ENCODE measurements at regions of chr14 and their contacts with region 1.

Region 1: GRCh38 chr14:52299692-52300278 is 14.3 kb upstream of the PTGER2 start:
- DNase-seq: peak in 4 of 5 donors; percentile 55 to 64 (median 60)
- H3K4me3 ChIP-seq: no peak overlapping the region
- H3K4me3 Mint-ChIP-seq: peak overlapping the region in 1 of 8 donors; percentile 36
- H3K27ac ChIP-seq: no peak overlapping the region
- H3K27ac Mint-ChIP-seq: peak overlapping the region in 3 of 7 donors; percentile 39 to 62 (median 52)
- H3K4me1 ChIP-seq: peaks cover 40% of the 10 kb centered on the region
- H3K4me1 Mint-ChIP-seq: peaks cover 37 to 55% (median 53%) of the 10 kb centered on the region in 4 donors
- H3K27me3 ChIP-seq: no peaks in the 10 kb centered on the region
- H3K27me3 Mint-ChIP-seq: no peaks in the 10 kb centered on the region

Region 2: DNA sequence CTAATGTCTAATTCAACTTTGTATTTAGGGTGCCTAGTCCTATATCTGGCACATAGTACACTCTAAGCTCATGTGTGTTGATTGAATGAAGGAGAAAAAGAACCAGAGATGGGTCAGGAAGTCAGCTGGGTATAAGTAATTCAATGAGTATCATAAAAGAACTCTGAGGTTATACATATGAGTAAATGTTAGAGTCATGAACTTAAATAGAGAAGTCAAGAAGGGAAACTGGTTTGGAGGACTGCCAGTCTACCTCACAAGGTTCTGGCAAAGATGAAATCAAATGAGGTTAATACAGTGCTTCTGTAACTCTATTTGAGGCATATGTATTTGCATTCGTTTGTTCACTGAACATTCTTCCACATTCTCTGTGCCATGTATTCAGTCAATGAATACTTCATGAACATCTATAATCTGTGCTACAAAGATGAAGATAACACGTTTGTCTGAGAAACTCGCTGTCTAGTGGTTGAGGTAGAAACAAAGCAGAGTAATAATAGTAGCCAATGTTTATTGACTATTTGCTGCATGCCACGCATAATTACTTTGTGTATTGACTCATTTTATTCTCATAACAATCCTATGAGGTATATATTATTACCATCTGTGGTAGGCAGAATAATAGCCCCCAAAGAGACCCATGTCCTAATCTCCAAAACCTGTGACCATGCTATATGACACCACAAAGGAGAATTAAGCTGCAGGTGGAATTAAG is 103.2 kb after region 1 on chr14:
- CTCF ChIA-PET with region 1: interaction called, 14 read pairs
- POLR2A ChIA-PET with region 1: no interaction called
- intact Hi-C with region 1: loop called (anchors 5 kb)
- DNase-seq: peak in 4 of 5 donors; percentile 43 to 54 (median 50)
- H3K4me3 ChIP-seq: peak overlapping the region in 1 of 2 donors; percentile 9
- H3K4me3 Mint-ChIP-seq: peak overlapping the region in 6 of 8 donors; percentile 18 to 70 (median 50)
- H3K27ac ChIP-seq: no peak overlapping the region
- H3K27ac Mint-ChIP-seq: peak overlapping the region in 6 of 7 donors; percentile 5 to 33 (median 19)
- H3K4me1 ChIP-seq: peaks cover 67% of the 10 kb centered on the region
- H3K4me1 Mint-ChIP-seq: peaks cover 53 to 73% (median 63%) of the 10 kb centered on the region in 4 donors
- H3K27me3 ChIP-seq: no peaks in the 10 kb centered on the region
- H3K27me3 Mint-ChIP-seq: no peaks in the 10 kb centered on the region

Region 3: DNA sequence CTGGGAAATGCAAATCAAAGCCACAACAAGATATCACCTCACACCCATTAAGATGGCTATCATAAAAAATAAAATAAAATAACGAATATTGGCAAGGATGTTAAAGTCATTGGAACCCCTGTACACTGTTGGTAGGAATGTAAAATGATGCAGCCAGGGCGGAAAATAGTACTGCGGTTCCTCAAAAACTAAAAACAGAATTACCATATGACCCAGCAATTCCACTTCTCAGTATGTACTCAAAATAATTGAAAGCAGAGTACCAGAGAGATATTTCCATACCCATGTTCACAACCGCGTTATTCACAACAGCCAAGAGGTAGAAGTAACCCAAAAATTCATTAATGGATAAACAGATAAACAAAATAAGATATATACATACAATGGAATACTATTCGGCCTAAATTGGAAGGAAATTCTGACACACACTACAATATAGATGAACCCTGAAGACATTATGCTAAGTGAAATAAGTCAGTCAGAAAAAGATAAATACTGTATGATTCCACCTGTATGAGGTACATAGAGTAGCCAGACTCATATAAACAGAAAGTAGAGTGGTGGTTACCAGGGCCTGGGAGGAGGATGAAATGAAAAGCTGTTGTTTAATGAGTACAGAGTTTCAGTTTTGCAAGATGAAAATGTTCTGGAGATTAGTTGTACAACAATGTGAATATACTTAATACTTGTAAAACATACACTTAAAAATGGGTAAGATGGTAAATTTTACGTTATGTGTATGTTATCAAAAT is 167.9 kb after region 1 on chr14:
- CTCF ChIA-PET with region 1: interaction called, 15 read pairs
- POLR2A ChIA-PET with region 1: no interaction called
- intact Hi-C with region 1: no loop called
- DNase-seq: peak in 1 of 5 donors; percentile 11
- H3K4me3 ChIP-seq: no peak overlapping the region
- H3K4me3 Mint-ChIP-seq: no peak overlapping the region
- H3K27ac ChIP-seq: no peak overlapping the region
- H3K27ac Mint-ChIP-seq: peak overlapping the region in 4 of 7 donors; percentile 6 to 73 (median 48)
- H3K4me1 ChIP-seq: peaks cover 7% of the 10 kb centered on the region
- H3K4me1 Mint-ChIP-seq: peaks cover 6 to 18% (median 13%) of the 10 kb centered on the region in 4 donors
- H3K27me3 ChIP-seq: no peaks in the 10 kb centered on the region
- H3K27me3 Mint-ChIP-seq: no peaks in the 10 kb centered on the region

Region 4: GRCh38 chr14:52776816-52777215 is 477.0 kb after region 1 on chr14:
- CTCF ChIA-PET with region 1: no interaction called
- POLR2A ChIA-PET with region 1: no interaction called
- intact Hi-C with region 1: loop called (anchors 2 kb)
- DNase-seq: peak in 1 of 5 donors; percentile 12
- H3K4me3 ChIP-seq: no peak overlapping the region
- H3K4me3 Mint-ChIP-seq: no peak overlapping the region
- H3K27ac ChIP-seq: no peak overlapping the region
- H3K27ac Mint-ChIP-seq: peak overlapping the region in 2 of 7 donors; percentile 10 to 15
- H3K4me1 ChIP-seq: no peaks in the 10 kb centered on the region
- H3K4me1 Mint-ChIP-seq: peaks cover 0 to 5% (median 2%) of the 10 kb centered on the region in 4 donors
- H3K27me3 ChIP-seq: no peaks in the 10 kb centered on the region
- H3K27me3 Mint-ChIP-seq: no peaks in the 10 kb centered on the region